ENCODE measurements at regions of chr12 and their contacts with region 1.

Region 1: DNA sequence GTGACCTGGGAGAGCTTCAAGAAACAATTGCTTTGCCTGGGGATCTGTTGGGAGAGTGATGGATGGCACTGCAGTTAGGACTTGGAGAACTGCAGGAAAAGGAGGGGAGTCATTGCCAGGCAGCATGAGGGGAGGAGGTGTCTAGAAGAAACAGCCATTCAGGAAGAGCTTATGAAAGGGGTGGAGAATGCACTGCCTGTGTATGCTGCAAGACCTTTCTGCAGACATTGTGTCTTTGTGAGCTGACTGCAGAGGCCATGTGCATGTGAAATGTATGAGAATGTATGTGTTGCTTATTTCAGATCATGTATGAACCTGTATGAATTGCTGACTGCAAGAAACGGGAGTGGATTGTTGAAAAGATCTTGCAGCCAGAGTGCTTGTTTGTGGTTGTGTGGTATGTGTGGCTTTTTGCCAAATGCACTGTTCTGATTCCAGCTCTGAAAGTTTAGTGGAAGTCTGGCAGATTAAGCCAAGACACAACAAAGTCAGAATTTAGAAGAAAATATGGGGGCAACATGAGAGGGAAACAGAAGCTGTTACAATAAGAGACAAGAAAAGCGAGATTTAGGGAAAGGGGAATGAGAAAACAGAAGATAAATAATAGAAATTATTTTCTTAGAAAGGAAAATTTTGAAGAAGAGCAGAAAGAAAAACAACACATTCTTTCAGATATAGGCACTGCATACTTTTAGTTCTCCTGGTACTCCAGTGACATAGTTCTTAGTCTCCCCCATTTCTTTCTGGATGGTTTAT is 9.8 kb upstream of the RIMKLB start:
- DNase-seq: no peak
- H3K4me3 ChIP-seq: no peak overlapping the region
- H3K27ac ChIP-seq: peak overlapping the region in 3 of 4 donors; percentile 51 to 68 (median 61)
- H3K4me1 ChIP-seq: peaks cover 14 to 36% (median 24%) of the 10 kb centered on the region in 3 donors
- H3K27me3 ChIP-seq: no peaks in the 10 kb centered on the region
- CTCF ChIP-seq: no peak
- POLR2A ChIP-seq: no peak

Region 2: DNA sequence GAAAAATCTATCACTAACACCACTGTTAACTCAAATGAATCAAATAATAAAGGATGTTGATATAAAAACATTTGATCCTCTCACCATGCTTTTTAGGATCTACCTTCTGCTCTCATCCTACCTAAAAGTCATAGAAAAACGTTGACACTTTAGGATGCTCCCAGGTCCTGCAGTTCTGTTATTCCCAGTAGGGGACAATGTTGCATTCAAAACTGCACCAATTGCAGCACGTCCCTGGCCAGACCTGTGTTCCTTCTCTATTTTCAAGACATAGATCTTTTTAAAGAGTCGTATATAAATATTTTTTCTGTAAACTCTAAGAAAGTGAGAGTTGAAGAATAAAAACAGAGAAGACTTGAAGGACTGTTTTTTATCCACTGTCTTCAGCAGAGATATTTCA is 84.2 kb before region 1 on chr12:
- intact Hi-C with region 1: no loop called
- DNase-seq: no peak
- H3K4me3 ChIP-seq: no peak overlapping the region
- H3K27ac ChIP-seq: no peak overlapping the region
- H3K4me1 ChIP-seq: peaks cover 0 to 1% (median 0%) of the 10 kb centered on the region in 3 donors
- H3K27me3 ChIP-seq: peaks cover 0 to 11% (median 0%) of the 10 kb centered on the region in 4 donors
- CTCF ChIP-seq: peak in 1 of 6 experiments; percentile 33
- POLR2A ChIP-seq: no peak

Region 3: DNA sequence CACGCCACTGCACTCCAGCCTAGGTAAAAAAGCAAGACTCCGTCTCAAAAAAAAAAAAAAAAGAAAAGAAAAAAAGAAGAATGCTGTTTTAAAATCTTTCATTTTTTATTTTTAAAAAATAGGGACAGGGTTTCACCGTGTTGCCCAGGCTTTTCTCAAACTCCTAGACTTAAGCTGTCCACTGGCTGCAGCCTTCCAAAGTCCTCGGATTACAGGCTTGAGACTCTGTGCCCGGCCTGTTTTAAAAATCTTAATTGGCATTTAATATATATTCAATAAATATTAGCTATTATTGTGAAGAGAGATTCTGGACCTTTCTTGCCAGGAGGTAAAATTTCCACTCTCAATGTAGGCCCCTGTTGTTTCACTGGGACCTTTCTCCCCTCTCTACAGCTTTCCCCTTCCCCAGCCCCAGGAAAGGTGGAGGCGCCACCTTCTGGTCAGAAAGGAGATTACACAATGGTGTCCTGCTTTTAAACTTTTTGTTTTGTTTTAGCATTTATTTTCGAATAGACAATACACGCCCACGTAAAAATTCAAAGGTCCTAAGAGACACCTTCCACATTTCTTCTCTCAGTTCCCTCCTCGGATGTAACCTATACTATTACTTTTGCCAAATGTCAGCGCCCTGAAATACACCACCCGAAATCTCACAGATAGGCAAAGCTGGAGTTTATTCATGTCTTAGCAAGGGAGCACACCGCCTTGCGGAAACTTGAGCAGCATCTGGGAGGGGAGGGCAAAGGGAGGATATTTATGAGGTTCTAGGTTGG is 202.5 kb after region 1 on chr12:
- intact Hi-C with region 1: loop called (anchors 10 kb)
- DNase-seq: no peak
- H3K4me3 ChIP-seq: peak overlapping the region in 3 of 4 donors; percentile 40 to 65 (median 45)
- H3K27ac ChIP-seq: peak overlapping the region in 1 of 4 donors; percentile 48
- H3K4me1 ChIP-seq: peaks cover 0 to 9% (median 0%) of the 10 kb centered on the region in 3 donors
- H3K27me3 ChIP-seq: no peaks in the 10 kb centered on the region
- CTCF ChIP-seq: peak; percentile 79 to 91 (median 86)
- POLR2A ChIP-seq: no peak

Region 4: DNA sequence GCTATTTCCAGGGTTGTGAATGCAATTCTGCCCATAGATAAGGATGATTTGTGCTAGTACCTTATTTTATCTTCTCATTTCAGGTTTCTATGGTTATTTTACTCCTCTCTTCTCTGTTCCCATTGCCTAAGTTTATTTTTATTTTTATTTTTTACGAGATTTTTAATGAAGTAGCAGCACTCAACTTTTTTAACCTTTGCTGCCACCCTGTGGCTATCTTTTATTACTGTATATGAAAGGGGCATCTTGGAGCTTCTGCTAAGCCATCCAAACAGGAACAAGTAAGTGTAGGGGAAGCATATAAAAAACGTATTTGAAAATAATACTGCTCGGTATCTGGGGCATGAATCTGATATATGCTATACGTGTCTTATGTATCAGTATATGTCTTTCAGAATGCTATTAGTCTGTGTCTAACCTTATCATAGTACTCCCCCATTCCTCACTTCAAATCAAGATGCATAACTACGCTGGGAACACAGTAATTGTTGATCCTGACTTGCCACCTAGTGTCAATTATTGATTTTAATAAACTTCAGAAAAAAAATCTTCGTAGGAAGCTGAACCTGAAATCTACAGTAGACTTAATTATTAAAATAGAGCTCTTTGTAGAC is 361.6 kb after region 1 on chr12:
- intact Hi-C with region 1: loop called (anchors 10 kb)
- DNase-seq: no peak
- H3K4me3 ChIP-seq: no peak overlapping the region
- H3K27ac ChIP-seq: no peak overlapping the region
- H3K4me1 ChIP-seq: no peaks in the 10 kb centered on the region
- H3K27me3 ChIP-seq: peaks cover 0 to 5% (median 0%) of the 10 kb centered on the region in 4 donors
- CTCF ChIP-seq: peak in 5 of 6 experiments; percentile 29 to 63 (median 50)
- POLR2A ChIP-seq: no peak

Measured in esophagus squamous epithelium (tissue), 5 donors.